ENCODE measurements at regions of chr9 and their contacts with region 1.

Region 1: GRCh38 chr9:101372327-101373118 is 12.3 kb downstream of the BAAT start:
- DNase-seq: no peak
- H3K4me3 Mint-ChIP-seq: no peak overlapping the region
- H3K27ac Mint-ChIP-seq: no peak overlapping the region
- H3K4me1 Mint-ChIP-seq: no peaks in the 10 kb centered on the region
- H3K27me3 Mint-ChIP-seq: peaks cover 20% of the 10 kb centered on the region

Region 2: GRCh38 chr9:101387871-101388506 is 15.5 kb after region 1 on chr9:
- CTCF ChIA-PET with region 1: interaction called, 18 read pairs
- intact Hi-C with region 1: no loop called
- DNase-seq: no peak
- H3K4me3 Mint-ChIP-seq: no peak overlapping the region
- H3K27ac Mint-ChIP-seq: peak overlapping the region; percentile 69
- H3K4me1 Mint-ChIP-seq: peaks cover 26% of the 10 kb centered on the region
- H3K27me3 Mint-ChIP-seq: no peaks in the 10 kb centered on the region

Region 3: DNA sequence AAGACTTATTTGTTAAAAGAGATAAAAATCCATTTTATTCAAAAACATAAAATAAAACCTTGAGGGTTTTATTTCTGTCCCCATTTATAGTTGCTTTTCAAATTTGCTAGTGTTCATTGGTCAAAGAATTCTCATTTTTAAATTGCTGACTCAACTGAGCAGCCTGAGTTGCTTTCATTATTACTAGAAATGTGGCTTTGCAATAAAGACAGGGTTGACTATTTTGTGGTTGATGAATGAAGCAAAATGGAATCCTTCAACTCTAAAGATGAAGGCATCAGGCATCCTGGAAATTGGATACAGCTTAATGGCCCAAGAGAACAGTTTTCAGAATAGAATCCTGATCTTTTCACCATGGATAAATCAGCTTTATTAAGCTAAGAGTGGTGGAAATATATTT is 246.2 kb after region 1 on chr9:
- CTCF ChIA-PET with region 1: no interaction called
- intact Hi-C with region 1: no loop called
- DNase-seq: no peak
- H3K4me3 Mint-ChIP-seq: no peak overlapping the region
- H3K27ac Mint-ChIP-seq: no peak overlapping the region
- H3K4me1 Mint-ChIP-seq: no peaks in the 10 kb centered on the region
- H3K27me3 Mint-ChIP-seq: no peaks in the 10 kb centered on the region